Cardiac septum (tissue), 1 donor: ENCODE measurements at regions of chr5 and their contacts with region 1.

Region 1: DNA sequence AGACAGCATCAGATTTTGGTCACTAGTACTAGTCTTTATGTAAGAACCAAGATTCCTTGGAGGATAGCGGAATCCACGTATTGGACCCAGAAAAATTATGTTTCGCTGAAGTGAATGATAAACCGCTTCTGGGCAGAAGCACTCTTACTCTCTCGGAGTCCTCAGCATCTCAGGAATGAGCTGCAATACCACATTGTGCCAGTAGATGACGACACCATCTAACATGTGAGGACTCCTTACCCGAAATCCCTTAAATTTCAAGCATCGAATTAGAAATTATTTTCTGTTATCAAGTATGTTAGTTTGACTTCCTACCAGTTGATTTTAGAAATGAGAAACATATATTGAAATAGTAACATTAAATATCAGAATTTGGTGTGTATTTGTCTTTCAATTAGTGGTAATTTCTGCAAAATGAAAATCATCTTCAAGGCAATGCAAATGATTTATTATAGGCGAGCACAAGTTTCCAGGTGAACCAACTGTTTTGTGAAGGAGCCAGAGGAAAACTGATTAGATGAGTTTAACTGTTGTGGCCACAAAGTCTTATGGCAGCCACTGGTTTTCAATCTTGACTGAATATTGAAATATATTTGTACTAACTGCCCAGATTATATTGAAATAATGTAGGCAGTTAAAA is 66.0 kb upstream of the CAMK4 start:
- DNase-seq: no peak

Region 2: DNA sequence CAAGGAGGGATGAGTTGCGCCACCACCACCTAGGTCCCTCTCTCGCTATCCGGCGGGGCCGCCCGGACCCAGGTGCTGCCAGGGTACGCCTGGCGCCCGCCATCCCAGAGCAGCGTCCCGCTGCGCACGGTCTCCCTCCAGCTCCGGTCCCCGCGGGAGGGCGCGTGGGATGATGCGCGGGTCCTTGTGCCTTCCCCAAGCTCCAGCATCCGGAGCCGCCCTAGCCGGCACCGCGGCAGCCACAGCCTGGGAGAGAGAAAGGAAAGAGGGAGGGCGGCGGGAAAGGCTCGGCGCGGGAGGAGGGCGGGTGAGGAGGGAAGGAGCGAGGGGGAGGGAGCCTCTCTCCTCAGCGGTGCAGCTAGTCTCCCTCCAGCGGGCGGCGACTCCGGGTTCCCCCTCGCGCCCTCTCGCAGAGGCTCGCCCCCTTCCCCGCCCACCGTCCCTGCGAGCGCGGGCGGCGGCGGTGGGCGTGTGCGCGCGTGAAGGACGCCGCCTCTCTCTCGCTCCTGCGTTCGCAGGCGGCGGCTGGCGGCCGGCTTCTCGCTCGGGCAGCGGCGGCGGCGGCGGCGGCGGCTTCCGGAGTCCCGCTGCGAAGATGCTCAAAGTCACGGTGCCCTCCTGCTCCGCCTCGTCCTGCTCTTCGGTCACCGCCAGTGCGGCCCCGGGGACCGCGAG is 65.8 kb after region 1 on chr5 and contains the start of gene CAMK4:
- intact Hi-C with region 1: no loop called
- DNase-seq: peak; percentile 77
- total RNA-seq, gene CAMK4: 0.48 TPM

Region 3: GRCh38 chr5:111278845-111279504 is 120.8 kb after region 1 on chr5:
- intact Hi-C with region 1: loop called (anchors 5 kb)
- DNase-seq: no peak

Region 4: GRCh38 chr5:111432883-111433536 is 274.8 kb after region 1 on chr5:
- intact Hi-C with region 1: no loop called
- DNase-seq: no peak

Region 5: GRCh38 chr5:111461255-111461671 is 303.0 kb after region 1 on chr5:
- intact Hi-C with region 1: loop called (anchors 10 kb)
- DNase-seq: no peak

Region 6: DNA sequence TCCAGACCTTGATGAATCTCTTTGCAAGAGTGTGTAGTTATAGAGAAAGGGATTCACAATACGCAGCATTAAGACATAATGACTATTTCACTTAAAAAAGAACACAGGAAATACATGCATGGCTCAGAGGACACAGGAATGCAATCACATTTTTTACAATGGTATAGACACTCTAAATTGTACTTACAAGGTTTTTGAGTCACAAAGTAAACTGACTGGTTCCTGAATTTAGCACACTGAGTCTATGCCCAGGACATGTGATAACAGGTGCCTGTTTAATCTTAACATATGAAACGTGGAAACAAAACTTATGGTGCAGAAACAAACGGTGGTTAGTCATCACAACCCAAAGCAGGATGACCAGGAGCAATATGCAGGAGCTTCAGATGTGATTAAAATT is 1254.1 kb after region 1 on chr5:
- intact Hi-C with region 1: no loop called
- DNase-seq: no peak